CD8-positive, alpha-beta T cell (primary cell): ENCODE measurements at regions of chr12 and their contacts with region 1.

Region 1: GRCh38 chr12:6662906-6663742 is at the start of gene ING4:
- DNase-seq: peak; percentile 91 to 100 (median 95)
- ATAC-seq: peak; percentile 97
- H3K4me3 ChIP-seq: peak within 1 kb of the TSS; percentile 81 to 92
- H3K4me3 Mint-ChIP-seq: peak within 1 kb of the TSS; percentile 96
- H3K27ac ChIP-seq: peak within 1 kb of the TSS; percentile 87 to 91
- H3K27ac Mint-ChIP-seq: peak within 1 kb of the TSS; percentile 97
- H3K4me1 ChIP-seq: peaks cover 20% of the 10 kb centered on the region
- H3K4me1 Mint-ChIP-seq: peaks cover 38% of the 10 kb centered on the region
- H3K27me3 ChIP-seq: no peaks in the 10 kb centered on the region
- H3K27me3 Mint-ChIP-seq: no peaks in the 10 kb centered on the region
- CTCF ChIP-seq: no peak
- total RNA-seq, gene ING4: 14.1 to 15.9 TPM

Region 2: GRCh38 chr12:6554168-6555017 is 108.7 kb before region 1 on chr12:
- CTCF ChIA-PET with region 1: interaction called, 3 read pairs
- POLR2A ChIA-PET with region 1: no interaction called
- intact Hi-C with region 1: loop called (anchors 1 to 2 kb)
- DNase-seq: peak; percentile 55 to 81 (median 71)
- ATAC-seq: peak; percentile 61
- H3K4me3 ChIP-seq: peak overlapping the region; percentile 70 to 96
- H3K4me3 Mint-ChIP-seq: peak overlapping the region; percentile 87
- H3K27ac ChIP-seq: no peak overlapping the region
- H3K27ac Mint-ChIP-seq: peak overlapping the region; percentile 58
- H3K4me1 ChIP-seq: peaks cover 35% of the 10 kb centered on the region
- H3K4me1 Mint-ChIP-seq: peaks cover 49% of the 10 kb centered on the region
- H3K27me3 ChIP-seq: no peaks in the 10 kb centered on the region
- H3K27me3 Mint-ChIP-seq: no peaks in the 10 kb centered on the region
- CTCF ChIP-seq: peak; percentile 50

Region 3: DNA sequence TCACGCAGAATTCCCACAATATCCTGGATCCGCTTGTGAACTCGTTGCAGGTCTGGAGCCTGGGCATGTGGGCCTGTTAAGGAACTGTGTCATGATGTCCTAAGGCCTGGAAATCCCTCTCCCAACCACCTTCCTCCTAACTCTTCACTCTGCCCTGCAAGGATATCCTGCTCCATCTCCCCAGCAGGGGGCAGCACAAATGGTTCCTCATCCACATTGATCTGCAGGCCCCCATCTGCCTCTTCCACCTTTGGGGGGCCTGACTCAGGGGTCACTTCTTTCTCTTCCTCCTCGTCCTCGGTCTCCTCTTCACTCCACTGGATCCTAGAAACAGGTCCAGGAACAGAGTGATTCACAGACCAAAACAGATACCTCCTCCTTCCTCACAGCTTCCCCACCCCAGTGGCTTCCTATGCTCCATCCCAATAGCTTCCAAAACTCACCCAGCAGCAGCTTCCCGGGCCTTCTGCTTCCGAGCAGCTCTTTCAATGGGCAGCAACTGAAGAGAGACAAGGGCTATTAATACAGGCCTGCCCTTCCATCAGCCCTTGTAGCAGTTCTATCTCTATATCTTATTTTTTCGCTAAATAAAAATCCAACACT is 99.6 kb before region 1 on chr12:
- CTCF ChIA-PET with region 1: interaction called, 3 read pairs
- POLR2A ChIA-PET with region 1: no interaction called
- intact Hi-C with region 1: loop called (anchors 1 kb)
- DNase-seq: peak; percentile 39 to 82 (median 73)
- ATAC-seq: peak; percentile 27
- H3K4me3 ChIP-seq: no peak overlapping the region
- H3K4me3 Mint-ChIP-seq: no peak overlapping the region
- H3K27ac ChIP-seq: no peak overlapping the region
- H3K27ac Mint-ChIP-seq: peak overlapping the region; percentile 78
- H3K4me1 ChIP-seq: peaks cover 18% of the 10 kb centered on the region
- H3K4me1 Mint-ChIP-seq: peaks cover 42% of the 10 kb centered on the region
- H3K27me3 ChIP-seq: no peaks in the 10 kb centered on the region
- H3K27me3 Mint-ChIP-seq: no peaks in the 10 kb centered on the region
- CTCF ChIP-seq: peak; percentile 71

Region 4: GRCh38 chr12:6613776-6614512 is 49.2 kb before region 1 on chr12:
- CTCF ChIA-PET with region 1: interaction called, 6 read pairs
- POLR2A ChIA-PET with region 1: interaction called, 3 read pairs
- intact Hi-C with region 1: loop called (anchors 1 to 2 kb)
- DNase-seq: peak in 7 of 9 experiments; percentile 36 to 90 (median 67)
- ATAC-seq: peak; percentile 43
- H3K4me3 ChIP-seq: no peak overlapping the region
- H3K4me3 Mint-ChIP-seq: no peak overlapping the region
- H3K27ac ChIP-seq: peak overlapping the region in 1 of 2 experiments; percentile 77
- H3K27ac Mint-ChIP-seq: peak overlapping the region; percentile 90
- H3K4me1 ChIP-seq: peaks cover 37% of the 10 kb centered on the region
- H3K4me1 Mint-ChIP-seq: peaks cover 55% of the 10 kb centered on the region
- H3K27me3 ChIP-seq: no peaks in the 10 kb centered on the region
- H3K27me3 Mint-ChIP-seq: no peaks in the 10 kb centered on the region
- CTCF ChIP-seq: no peak

Region 5: DNA sequence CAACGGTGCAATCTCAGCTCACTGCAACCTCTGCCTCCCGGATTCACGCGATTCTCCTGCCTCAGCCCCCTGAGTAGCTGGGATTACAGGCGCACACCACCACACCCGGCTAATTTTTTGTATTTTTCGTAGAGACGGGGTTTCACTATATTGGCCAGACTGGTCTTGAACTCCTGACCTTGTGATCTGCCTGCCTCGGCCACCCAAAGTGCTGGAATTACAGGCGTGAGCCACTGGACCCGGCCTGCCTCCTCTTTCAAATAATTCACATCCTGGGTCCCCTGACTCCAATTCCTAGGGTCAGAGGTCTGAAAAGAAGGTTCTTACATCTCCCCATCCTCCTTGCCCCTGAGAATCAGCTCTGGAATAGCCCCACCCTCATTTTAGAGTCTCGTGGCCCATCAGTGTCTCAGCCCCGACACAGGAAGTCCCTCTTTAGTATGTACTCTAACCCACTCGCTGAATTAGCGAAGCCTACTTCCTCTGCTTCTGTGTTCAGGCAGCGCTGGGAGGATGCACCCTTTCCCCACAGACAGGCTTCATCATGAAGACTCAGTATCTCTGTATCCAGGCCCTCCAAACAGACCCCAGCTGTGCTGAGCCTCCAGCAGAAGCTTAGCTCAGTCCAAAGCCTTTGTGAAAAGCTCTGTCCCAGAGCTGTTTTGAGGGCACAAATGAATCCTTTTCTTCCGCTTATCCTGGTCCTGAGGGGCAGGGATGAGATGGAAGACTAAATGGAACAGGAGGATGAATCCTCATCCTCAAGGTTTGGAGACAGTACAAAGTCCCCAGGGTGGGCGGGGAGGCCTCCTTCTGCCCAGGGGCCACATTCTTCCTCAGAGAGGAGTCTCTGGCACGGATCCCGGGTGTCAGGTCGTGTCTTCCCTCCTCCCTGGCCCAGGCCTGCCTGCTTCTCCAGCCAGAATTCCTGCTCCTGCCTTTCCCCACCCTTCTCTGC is 30.8 kb before region 1 on chr12:
- CTCF ChIA-PET with region 1: no interaction called
- POLR2A ChIA-PET with region 1: interaction called, 4 read pairs
- intact Hi-C with region 1: loop called (anchors 1 to 2 kb)
- DNase-seq: peak in 8 of 9 experiments; percentile 46 to 83 (median 66)
- ATAC-seq: peak; percentile 57
- H3K4me3 ChIP-seq: peak overlapping the region; percentile 58 to 68
- H3K4me3 Mint-ChIP-seq: peak overlapping the region; percentile 83
- H3K27ac ChIP-seq: peak overlapping the region; percentile 60 to 87
- H3K27ac Mint-ChIP-seq: peak overlapping the region; percentile 98
- H3K4me1 ChIP-seq: peaks cover 70% of the 10 kb centered on the region
- H3K4me1 Mint-ChIP-seq: peaks cover 66% of the 10 kb centered on the region
- H3K27me3 ChIP-seq: no peaks in the 10 kb centered on the region
- H3K27me3 Mint-ChIP-seq: no peaks in the 10 kb centered on the region
- CTCF ChIP-seq: no peak

Region 6: GRCh38 chr12:6723607-6724396 is 60.7 kb after region 1 on chr12 and contains the start of gene COPS7A:
- CTCF ChIA-PET with region 1: no interaction called
- POLR2A ChIA-PET with region 1: interaction called, 7 read pairs
- intact Hi-C with region 1: loop called (anchors 1 kb)
- DNase-seq: peak; percentile 83 to 98 (median 97)
- ATAC-seq: peak; percentile 85
- H3K4me3 ChIP-seq: peak within 1 kb of the TSS; percentile 59 to 68
- H3K4me3 Mint-ChIP-seq: peak within 1 kb of the TSS; percentile 83
- H3K27ac ChIP-seq: peak within 1 kb of the TSS; percentile 67 to 92
- H3K27ac Mint-ChIP-seq: peak within 1 kb of the TSS; percentile 94
- H3K4me1 ChIP-seq: peaks cover 19% of the 10 kb centered on the region
- H3K4me1 Mint-ChIP-seq: peaks cover 27% of the 10 kb centered on the region
- H3K27me3 ChIP-seq: no peaks in the 10 kb centered on the region
- H3K27me3 Mint-ChIP-seq: no peaks in the 10 kb centered on the region
- CTCF ChIP-seq: peak; percentile 28
- total RNA-seq, gene COPS7A: 11.0 to 11.1 TPM

Region 7: GRCh38 chr12:6970089-6970527 is 307.0 kb after region 1 on chr12:
- CTCF ChIA-PET with region 1: no interaction called
- POLR2A ChIA-PET with region 1: no interaction called
- intact Hi-C with region 1: no loop called
- DNase-seq: no peak
- ATAC-seq: peak; percentile 4
- H3K4me3 ChIP-seq: peak overlapping the region; percentile 84 to 98
- H3K4me3 Mint-ChIP-seq: peak overlapping the region; percentile 100
- H3K27ac ChIP-seq: peak overlapping the region; percentile 89 to 95
- H3K27ac Mint-ChIP-seq: peak overlapping the region; percentile 98
- H3K4me1 ChIP-seq: peaks cover 29% of the 10 kb centered on the region
- H3K4me1 Mint-ChIP-seq: peaks cover 46% of the 10 kb centered on the region
- H3K27me3 ChIP-seq: no peaks in the 10 kb centered on the region
- H3K27me3 Mint-ChIP-seq: no peaks in the 10 kb centered on the region
- CTCF ChIP-seq: no peak

Region 8: GRCh38 chr12:7047306-7047705 is 384.2 kb after region 1 on chr12:
- CTCF ChIA-PET with region 1: no interaction called
- POLR2A ChIA-PET with region 1: no interaction called
- intact Hi-C with region 1: no loop called
- DNase-seq: no peak
- ATAC-seq: no peak
- H3K4me3 ChIP-seq: no peak overlapping the region
- H3K4me3 Mint-ChIP-seq: no peak overlapping the region
- H3K27ac ChIP-seq: no peak overlapping the region
- H3K27ac Mint-ChIP-seq: no peak overlapping the region
- H3K4me1 ChIP-seq: no peaks in the 10 kb centered on the region
- H3K4me1 Mint-ChIP-seq: peaks cover 8% of the 10 kb centered on the region
- H3K27me3 ChIP-seq: no peaks in the 10 kb centered on the region
- H3K27me3 Mint-ChIP-seq: no peaks in the 10 kb centered on the region
- CTCF ChIP-seq: no peak

Region 9: DNA sequence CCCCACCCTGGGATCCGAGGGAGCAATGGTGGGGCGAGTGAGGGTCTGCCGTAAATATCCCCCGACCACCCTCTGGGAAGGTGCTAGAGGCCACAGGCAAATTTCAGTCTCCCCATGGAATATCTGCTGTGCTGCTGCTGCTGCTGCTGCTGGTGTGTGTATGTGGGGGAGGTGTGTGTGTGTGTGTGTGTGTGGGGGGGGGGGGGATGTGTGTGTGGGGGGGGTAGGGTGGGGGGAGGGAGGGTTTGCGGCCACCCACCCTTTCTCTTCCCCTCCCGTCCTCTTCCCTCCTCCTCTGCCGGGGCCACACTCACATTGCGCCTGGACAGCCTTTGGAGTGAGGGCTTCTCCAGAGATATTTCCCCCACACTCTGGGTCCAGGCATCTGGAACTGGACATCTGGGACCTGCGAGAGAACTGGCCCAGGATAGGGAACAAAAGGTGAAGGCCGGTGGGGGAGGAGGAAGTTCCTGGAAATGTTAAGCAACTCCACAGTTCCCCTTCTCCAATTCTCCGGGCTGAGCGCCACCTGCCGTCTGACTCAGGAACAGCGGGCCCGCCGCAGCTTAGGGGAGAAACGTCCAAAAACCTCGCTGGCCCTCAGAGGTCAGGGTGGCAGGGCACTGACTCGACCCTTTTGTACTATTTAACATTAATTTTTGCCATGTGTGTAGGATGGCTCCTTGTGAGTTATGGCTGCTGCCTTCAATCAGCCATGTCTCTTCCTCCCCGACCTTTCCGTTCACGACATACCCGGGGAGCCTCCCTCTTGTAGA is 445.9 kb after region 1 on chr12 and contains the start of gene C1RL:
- CTCF ChIA-PET with region 1: no interaction called
- POLR2A ChIA-PET with region 1: no interaction called
- intact Hi-C with region 1: loop called in 1 of 2 experiments (anchors 5 kb)
- DNase-seq: peak; percentile 58 to 85 (median 77)
- ATAC-seq: peak; percentile 46
- H3K4me3 ChIP-seq: peak within 1 kb of the TSS; percentile 88 to 97
- H3K4me3 Mint-ChIP-seq: peak within 1 kb of the TSS; percentile 94
- H3K27ac ChIP-seq: peak within 1 kb of the TSS; percentile 67 to 80
- H3K27ac Mint-ChIP-seq: peak within 1 kb of the TSS; percentile 93
- H3K4me1 ChIP-seq: peaks cover 16% of the 10 kb centered on the region
- H3K4me1 Mint-ChIP-seq: peaks cover 44% of the 10 kb centered on the region
- H3K27me3 ChIP-seq: no peaks in the 10 kb centered on the region
- H3K27me3 Mint-ChIP-seq: no peaks in the 10 kb centered on the region
- CTCF ChIP-seq: peak; percentile 90
- total RNA-seq, gene C1RL: 8.0 to 9.0 TPM